Activated naive CD4-positive, alpha-beta T cell treated with anti-CD3 and anti-CD28 coated beads for 36 hours (primary cell): ENCODE measurements at regions of chr11 and their contacts with region 1.

Region 1: GRCh38 chr11:65615229-65615941 is at the start of gene PCNX3:
- DNase-seq: peak; percentile 100
- H3K4me3 Mint-ChIP-seq: peak within 1 kb of the TSS; percentile 95
- H3K27ac Mint-ChIP-seq: peak within 1 kb of the TSS; percentile 98
- H3K4me1 Mint-ChIP-seq: peaks cover 54% of the 10 kb centered on the region
- H3K27me3 Mint-ChIP-seq: no peaks in the 10 kb centered on the region
- total RNA-seq, gene PCNX3: 21.6 to 24.7 TPM

Region 2: GRCh38 chr11:65382033-65382807 is 233.2 kb before region 1 on chr11 and contains the start of gene SLC25A45:
- CTCF ChIA-PET with region 1: no interaction called
- intact Hi-C with region 1: loop called (anchors 1 kb)
- DNase-seq: peak; percentile 97
- H3K4me3 Mint-ChIP-seq: peak within 1 kb of the TSS; percentile 96
- H3K27ac Mint-ChIP-seq: peak within 1 kb of the TSS; percentile 100
- H3K4me1 Mint-ChIP-seq: peaks cover 48% of the 10 kb centered on the region
- H3K27me3 Mint-ChIP-seq: no peaks in the 10 kb centered on the region
- total RNA-seq, gene SLC25A45: 10.4 to 12.1 TPM

Region 3: GRCh38 chr11:65593518-65594298 is 21.7 kb before region 1 on chr11:
- CTCF ChIA-PET with region 1: interaction called, 13 read pairs
- intact Hi-C with region 1: no loop called
- DNase-seq: peak; percentile 55
- H3K4me3 Mint-ChIP-seq: no peak overlapping the region
- H3K27ac Mint-ChIP-seq: no peak overlapping the region
- H3K4me1 Mint-ChIP-seq: peaks cover 16% of the 10 kb centered on the region
- H3K27me3 Mint-ChIP-seq: no peaks in the 10 kb centered on the region

Region 4: DNA sequence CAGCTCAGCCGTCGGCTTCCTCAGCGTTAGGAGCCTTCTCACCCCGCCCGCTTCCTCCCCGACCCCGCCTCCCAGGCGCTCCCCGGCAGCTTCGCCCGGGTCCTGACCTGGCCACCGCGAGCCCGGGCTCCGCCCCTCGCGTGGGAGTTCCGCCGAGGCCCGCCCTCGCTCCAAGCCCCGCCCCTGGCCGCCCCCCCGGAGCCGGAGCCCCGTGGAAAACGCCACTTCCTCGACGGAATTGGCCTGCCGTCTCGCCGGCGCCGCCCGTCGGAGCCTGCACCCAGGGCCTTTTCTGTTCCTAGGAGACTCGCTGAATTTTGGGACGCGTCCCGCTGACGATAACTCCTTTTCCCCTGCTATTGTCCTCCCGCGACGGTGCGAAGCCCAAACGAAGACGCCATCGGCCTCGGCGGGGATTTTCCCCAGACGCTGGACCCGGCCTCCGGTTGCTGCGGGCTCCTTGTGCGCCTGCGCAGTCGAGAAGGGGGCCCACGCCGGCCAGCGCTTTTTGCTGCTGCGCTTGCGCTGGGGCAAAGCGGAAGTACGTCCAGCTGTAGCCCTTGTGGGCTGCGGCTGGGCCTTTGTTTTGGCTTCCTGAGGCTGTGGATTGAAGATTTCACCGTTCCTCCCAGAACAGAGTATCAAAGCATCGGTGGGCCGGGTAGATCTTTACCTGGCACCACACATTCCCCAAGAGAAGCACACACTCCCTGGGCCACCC is 37.3 kb after region 1 on chr11:
- CTCF ChIA-PET with region 1: no interaction called
- intact Hi-C with region 1: loop called (anchors 1 kb)
- DNase-seq: peak; percentile 95
- H3K4me3 Mint-ChIP-seq: peak overlapping the region; percentile 80
- H3K27ac Mint-ChIP-seq: peak overlapping the region; percentile 94
- H3K4me1 Mint-ChIP-seq: peaks cover 46% of the 10 kb centered on the region
- H3K27me3 Mint-ChIP-seq: no peaks in the 10 kb centered on the region

Region 5: GRCh38 chr11:65711785-65712632 is 96.6 kb after region 1 on chr11 and contains the start of gene KAT5:
- CTCF ChIA-PET with region 1: no interaction called
- intact Hi-C with region 1: loop called (anchors 1 kb)
- DNase-seq: peak; percentile 100
- H3K4me3 Mint-ChIP-seq: peak within 1 kb of the TSS; percentile 95
- H3K27ac Mint-ChIP-seq: peak within 1 kb of the TSS; percentile 97
- H3K4me1 Mint-ChIP-seq: peaks cover 33% of the 10 kb centered on the region
- H3K27me3 Mint-ChIP-seq: no peaks in the 10 kb centered on the region
- total RNA-seq, gene KAT5: 60.1 to 67.1 TPM

Region 6: DNA sequence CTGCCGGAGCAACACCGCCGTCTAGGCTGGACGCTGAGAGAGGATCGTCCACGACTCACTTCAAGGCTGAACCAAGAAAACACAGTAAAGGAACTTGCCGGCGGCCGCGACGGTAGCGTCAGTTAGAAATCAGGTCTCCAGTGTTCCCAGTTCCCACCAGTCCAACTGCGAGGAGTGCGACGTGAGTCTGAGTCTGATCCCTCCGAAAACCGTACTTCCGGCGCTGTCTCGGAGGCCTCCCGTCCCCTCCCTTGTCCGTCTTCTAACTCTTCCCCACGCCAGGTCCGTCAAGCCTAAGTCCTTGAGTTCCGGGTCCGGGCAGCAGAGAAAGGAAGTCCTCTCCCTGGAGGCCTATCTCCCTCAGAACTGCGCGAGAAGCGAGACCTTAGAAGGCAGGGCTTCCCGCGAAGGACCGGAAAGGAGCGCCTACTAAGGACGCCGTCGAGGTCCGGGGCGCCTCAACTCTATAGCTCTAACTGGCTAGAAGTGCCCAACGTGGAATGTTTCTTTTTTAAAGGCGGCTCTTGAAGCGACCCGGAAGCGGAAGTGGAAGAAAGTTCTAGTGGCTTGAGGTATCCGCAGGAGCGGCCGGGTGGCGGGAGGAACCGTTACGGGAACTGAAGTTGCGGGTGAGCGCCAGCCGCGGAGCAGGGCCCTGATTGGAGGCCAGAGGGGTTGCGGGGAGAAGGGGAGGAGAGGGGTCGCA is 386.7 kb after region 1 on chr11 and contains the starts of genes BANF1 and EIF1AD:
- CTCF ChIA-PET with region 1: no interaction called
- intact Hi-C with region 1: loop called (anchors 1 kb)
- DNase-seq: peak; percentile 96
- H3K4me3 Mint-ChIP-seq: peak within 1 kb of the TSS; percentile 99
- H3K27ac Mint-ChIP-seq: peak within 1 kb of the TSS; percentile 99
- H3K4me1 Mint-ChIP-seq: peaks cover 44% of the 10 kb centered on the region
- H3K27me3 Mint-ChIP-seq: no peaks in the 10 kb centered on the region
- total RNA-seq, gene BANF1: 347 to 369 TPM
- total RNA-seq, gene EIF1AD: 31.2 to 31.7 TPM